GM23248 (cell line): ENCODE measurements at regions of chr13 and their contacts with region 1.

Region 1: DNA sequence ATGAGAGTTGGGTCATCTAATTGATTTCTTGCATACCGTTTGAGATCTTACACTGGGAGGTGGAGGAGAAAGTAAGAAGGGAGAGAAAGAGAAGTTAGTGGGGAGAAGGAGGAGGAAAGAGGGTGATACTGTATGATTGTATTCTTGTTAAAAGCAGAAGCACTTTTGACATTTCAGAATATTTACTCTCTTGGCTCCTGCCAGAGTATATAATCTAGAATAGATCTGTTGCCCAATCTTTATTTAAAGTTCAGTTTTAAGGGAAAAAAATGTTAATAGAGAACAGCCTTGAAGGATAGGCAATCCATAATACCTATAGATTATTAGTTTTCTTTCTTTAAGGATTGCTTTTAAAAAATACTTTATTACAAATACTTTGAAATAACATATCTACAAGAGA is 41.5 kb downstream of the PDS5B start:
- DNase-seq: no peak
- H3K4me3 ChIP-seq: no peak overlapping the region
- H3K27ac ChIP-seq: no peak overlapping the region
- H3K4me1 ChIP-seq: peaks cover 13% of the 10 kb centered on the region
- H3K27me3 ChIP-seq: no peaks in the 10 kb centered on the region

Region 2: DNA sequence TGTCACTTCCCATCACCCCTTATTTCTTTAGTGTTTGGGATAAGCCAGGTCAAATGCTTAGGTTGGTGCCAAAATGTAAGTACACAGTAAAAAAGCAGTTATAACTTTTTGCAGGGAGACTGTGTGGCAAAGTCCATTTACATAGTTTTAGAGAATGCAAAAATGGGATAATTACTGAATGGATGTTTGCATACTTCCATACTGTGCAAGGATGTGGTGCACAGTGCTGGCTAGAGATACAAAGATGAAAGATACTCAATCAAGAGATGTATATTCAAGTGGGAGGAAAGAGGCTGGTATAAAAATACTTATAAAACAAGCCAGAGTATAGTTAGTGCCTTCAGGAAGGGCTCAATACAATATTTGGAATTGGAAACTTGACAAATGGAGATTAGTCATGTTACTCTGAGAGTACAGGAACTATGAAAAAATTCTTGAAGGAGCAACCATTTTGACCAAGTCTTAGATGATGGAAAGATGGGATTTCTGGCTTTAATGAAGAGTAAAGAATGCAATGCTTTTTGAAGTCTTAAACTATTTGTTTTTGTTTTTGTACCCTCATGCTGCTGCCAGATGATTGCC is 33.5 kb before region 1 on chr13:
- in situ Hi-C with region 1: loop called (anchors 5 kb)
- DNase-seq: peak; percentile 44
- H3K4me3 ChIP-seq: no peak overlapping the region
- H3K27ac ChIP-seq: no peak overlapping the region
- H3K4me1 ChIP-seq: peaks cover 19% of the 10 kb centered on the region
- H3K27me3 ChIP-seq: no peaks in the 10 kb centered on the region